Sigmoid colon (tissue), 7 donors: ENCODE measurements at regions of chr13 and their contacts with region 1.

Region 1: DNA sequence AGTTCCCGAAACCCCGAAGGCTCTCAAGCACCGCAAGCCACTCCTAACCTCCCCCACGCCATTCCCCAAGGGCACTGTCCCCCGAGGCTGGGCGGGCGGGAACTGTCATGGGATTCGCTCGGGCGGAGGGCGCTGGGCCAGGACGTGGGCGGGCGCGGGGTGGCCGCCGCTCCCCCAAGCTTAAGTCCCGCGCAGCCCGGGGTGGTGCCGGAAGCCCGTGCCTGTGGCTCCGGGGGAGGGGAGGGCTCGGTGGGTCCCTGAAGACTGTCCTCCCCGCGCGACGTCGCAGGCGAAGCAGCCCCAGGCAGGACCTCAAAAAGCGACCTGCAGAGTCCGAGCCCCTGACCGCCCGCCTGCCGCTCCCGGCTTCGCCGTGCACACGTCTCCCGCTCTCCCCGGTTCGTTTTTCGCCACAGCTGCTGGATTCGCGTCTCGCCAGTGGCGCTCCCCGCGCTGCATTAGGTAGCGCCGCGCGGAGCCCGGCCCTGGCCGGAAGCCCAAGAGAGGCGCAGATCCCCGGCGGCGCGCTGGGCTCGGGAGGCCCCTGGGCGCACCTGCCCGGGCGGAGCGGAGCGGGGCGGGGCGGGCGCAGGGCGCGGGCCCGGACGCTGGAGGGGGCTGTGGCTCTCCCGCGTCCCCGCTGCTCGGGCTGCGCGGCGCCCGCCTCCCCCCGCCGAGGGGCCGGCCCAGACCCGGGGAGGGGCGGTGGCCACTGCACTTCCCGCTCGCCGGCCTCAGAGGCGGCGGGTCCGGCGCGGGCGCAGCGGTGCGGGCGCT is at the start of gene FARP1:
- DNase-seq: peak; percentile 86
- H3K4me3 ChIP-seq: peak within 1 kb of the TSS; percentile 51 to 94 (median 84)
- H3K27ac ChIP-seq: peak within 1 kb of the TSS; percentile 58 to 87 (median 80)
- H3K4me1 ChIP-seq: peaks cover 0 to 40% (median 27%) of the 10 kb centered on the region in 4 donors
- H3K27me3 ChIP-seq: no peaks in the 10 kb centered on the region
- CTCF ChIP-seq: peak in 1 of 4 experiments; percentile 36
- EP300 ChIP-seq: no peak
- POLR2A ChIP-seq: no peak
- total RNA-seq, gene FARP1: 32.9 to 96.4 (median 47.5) TPM

Region 2: GRCh38 chr13:97855570-97856303 is 286.8 kb before region 1 on chr13:
- intact Hi-C with region 1: loop called (anchors 10 kb)
- DNase-seq: peak; percentile 69
- H3K4me3 ChIP-seq: no peak overlapping the region
- H3K27ac ChIP-seq: no peak overlapping the region
- H3K4me1 ChIP-seq: peaks cover 0 to 9% (median 3%) of the 10 kb centered on the region in 4 donors
- H3K27me3 ChIP-seq: no peaks in the 10 kb centered on the region
- CTCF ChIP-seq: peak; percentile 28 to 81 (median 66)
- EP300 ChIP-seq: no peak
- POLR2A ChIP-seq: no peak

Region 3: GRCh38 chr13:98189841-98190505 is 47.4 kb after region 1 on chr13:
- intact Hi-C with region 1: loop called (anchors 5 kb)
- DNase-seq: no peak
- H3K4me3 ChIP-seq: no peak overlapping the region
- H3K27ac ChIP-seq: peak overlapping the region in 2 of 4 donors; percentile 69 to 74
- H3K4me1 ChIP-seq: peaks cover 0 to 61% (median 42%) of the 10 kb centered on the region in 4 donors
- H3K27me3 ChIP-seq: no peaks in the 10 kb centered on the region
- CTCF ChIP-seq: peak in 1 of 4 experiments; percentile 39
- EP300 ChIP-seq: no peak
- POLR2A ChIP-seq: no peak

Region 4: GRCh38 chr13:98397221-98397620 is 254.7 kb after region 1 on chr13:
- intact Hi-C with region 1: loop called (anchors 2 kb)
- DNase-seq: no peak
- H3K4me3 ChIP-seq: no peak overlapping the region
- H3K27ac ChIP-seq: no peak overlapping the region
- H3K4me1 ChIP-seq: peaks cover 0 to 11% (median 4%) of the 10 kb centered on the region in 4 donors
- H3K27me3 ChIP-seq: no peaks in the 10 kb centered on the region
- CTCF ChIP-seq: peak in 3 of 4 experiments; percentile 11 to 43 (median 34)
- EP300 ChIP-seq: no peak
- POLR2A ChIP-seq: no peak

Region 5: GRCh38 chr13:98429977-98430736 is 287.6 kb after region 1 on chr13:
- intact Hi-C with region 1: no loop called
- DNase-seq: no peak
- H3K4me3 ChIP-seq: no peak overlapping the region
- H3K27ac ChIP-seq: no peak overlapping the region
- H3K4me1 ChIP-seq: no peaks in the 10 kb centered on the region
- H3K27me3 ChIP-seq: no peaks in the 10 kb centered on the region
- CTCF ChIP-seq: no peak
- EP300 ChIP-seq: no peak
- POLR2A ChIP-seq: no peak

Region 6: GRCh38 chr13:98672944-98673545 is 530.5 kb after region 1 on chr13:
- intact Hi-C with region 1: loop called (anchors 5 kb)
- DNase-seq: peak; percentile 84
- H3K4me3 ChIP-seq: peak overlapping the region in 1 of 4 donors; percentile 2
- H3K27ac ChIP-seq: no peak overlapping the region
- H3K4me1 ChIP-seq: peaks cover 0 to 11% (median 3%) of the 10 kb centered on the region in 4 donors
- H3K27me3 ChIP-seq: no peaks in the 10 kb centered on the region
- CTCF ChIP-seq: peak; percentile 29 to 84 (median 76)
- EP300 ChIP-seq: no peak
- POLR2A ChIP-seq: no peak